Pancreas (tissue), 10 donors: ENCODE measurements at regions of chr6 and their contacts with region 1.

Region 1: GRCh38 chr6:154509421-154510142 is 903 bp downstream of the CNKSR3 start:
- DNase-seq: peak; percentile 34 to 87 (median 56)
- ATAC-seq: peak; percentile 5 to 13 (median 12)
- H3K4me3 ChIP-seq: peak overlapping the region; percentile 76 to 90 (median 81)
- H3K27ac ChIP-seq: peak overlapping the region; percentile 86 to 98 (median 96)
- H3K4me1 ChIP-seq: peaks cover 12 to 31% (median 15%) of the 10 kb centered on the region in 3 donors
- H3K27me3 ChIP-seq: no peaks in the 10 kb centered on the region
- CTCF ChIP-seq: no peak

Region 2: DNA sequence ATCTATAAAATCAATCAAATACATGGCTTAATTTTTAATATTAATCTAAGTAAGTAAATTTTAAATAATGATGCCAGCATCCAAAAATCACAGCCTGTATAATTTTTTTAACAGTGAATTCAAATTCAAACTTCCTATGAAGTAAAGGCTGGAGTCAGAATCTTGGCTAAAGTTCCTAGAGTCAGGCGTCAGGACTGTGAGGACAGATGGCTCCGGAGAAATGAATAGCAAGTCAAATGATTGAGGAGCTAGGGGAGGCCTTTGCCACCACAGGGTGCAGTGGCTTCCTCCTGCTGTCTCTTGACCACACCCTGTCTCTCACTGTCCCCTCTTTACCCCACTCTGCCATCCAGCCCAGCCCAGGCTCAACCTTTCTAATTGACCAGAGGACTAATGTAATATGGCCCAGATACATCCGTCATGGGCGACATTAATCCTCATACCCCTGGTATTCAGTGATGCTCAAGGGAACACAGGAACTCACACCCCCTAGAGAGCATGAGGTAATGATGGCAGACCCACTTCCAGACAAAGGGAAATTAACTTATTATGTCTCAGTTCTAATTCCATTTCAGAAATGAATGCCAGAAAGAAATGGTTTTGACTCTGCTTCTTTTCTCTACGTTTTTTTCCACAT is 417.1 kb before region 1 on chr6:
- intact Hi-C with region 1: no loop called
- DNase-seq: no peak
- ATAC-seq: no peak
- H3K4me3 ChIP-seq: no peak overlapping the region
- H3K27ac ChIP-seq: no peak overlapping the region
- H3K4me1 ChIP-seq: no peaks in the 10 kb centered on the region
- H3K27me3 ChIP-seq: no peaks in the 10 kb centered on the region
- CTCF ChIP-seq: no peak

Region 3: GRCh38 chr6:154579485-154579884 is 69.9 kb after region 1 on chr6:
- intact Hi-C with region 1: no loop called
- DNase-seq: no peak
- ATAC-seq: no peak
- H3K4me3 ChIP-seq: no peak overlapping the region
- H3K27ac ChIP-seq: no peak overlapping the region
- H3K4me1 ChIP-seq: no peaks in the 10 kb centered on the region
- H3K27me3 ChIP-seq: no peaks in the 10 kb centered on the region
- CTCF ChIP-seq: no peak

Region 4: GRCh38 chr6:154615483-154616025 is 106.0 kb after region 1 on chr6:
- intact Hi-C with region 1: loop called in 1 of 3 experiments (anchors 10 kb)
- DNase-seq: peak; percentile 89 to 96 (median 92)
- ATAC-seq: peak; percentile 82 to 95 (median 88)
- H3K4me3 ChIP-seq: peak overlapping the region in 2 of 4 donors; percentile 21 to 25
- H3K27ac ChIP-seq: peak overlapping the region; percentile 52 to 76 (median 59)
- H3K4me1 ChIP-seq: peaks cover 6 to 31% (median 13%) of the 10 kb centered on the region in 3 donors
- H3K27me3 ChIP-seq: no peaks in the 10 kb centered on the region
- CTCF ChIP-seq: peak in 1 of 4 donors; percentile 13